Left cardiac atrium (tissue), 4 donors: ENCODE measurements at regions of chr11 and their contacts with region 1.

Region 1: GRCh38 chr11:118928108-118928870 is 2.6 kb upstream of the BCL9L start:
- DNase-seq: peak; percentile 90
- ATAC-seq: peak; percentile 75 to 78

Region 2: DNA sequence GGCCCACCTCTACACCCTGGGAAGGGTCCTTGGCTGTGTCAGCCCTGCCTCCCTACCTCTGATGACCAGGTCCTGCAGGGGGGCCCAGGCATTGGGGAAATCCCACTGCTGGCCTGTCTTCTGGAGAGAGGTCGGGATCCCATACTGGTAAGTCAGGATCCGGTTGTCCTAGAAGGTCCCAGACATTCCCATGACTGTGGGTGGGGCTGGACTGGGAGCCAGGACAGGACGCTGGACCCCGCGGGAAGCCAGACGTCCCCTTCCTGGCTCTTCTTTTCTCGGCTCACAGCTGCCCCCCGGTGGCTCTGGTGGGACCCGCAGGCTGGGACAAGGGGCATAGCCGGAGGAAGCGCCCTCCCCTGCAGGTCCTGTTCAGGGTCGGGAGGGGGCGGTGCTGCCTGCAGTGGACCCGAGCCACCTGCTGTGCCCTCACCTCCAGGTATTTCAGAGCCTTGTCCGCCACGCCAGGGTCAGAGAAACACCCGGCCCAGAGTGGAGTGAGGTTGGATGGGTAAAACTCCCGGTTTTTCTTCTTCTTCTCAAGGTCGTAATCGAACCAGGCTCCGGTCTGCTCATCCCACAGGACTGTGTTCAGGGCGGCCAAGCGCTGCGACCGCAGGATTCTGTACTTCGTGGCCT is 268.9 kb before region 1 on chr11:
- intact Hi-C with region 1: loop called in 1 of 2 experiments (anchors 1 kb)
- DNase-seq: peak; percentile 93
- ATAC-seq: peak; percentile 76 to 85

Region 3: DNA sequence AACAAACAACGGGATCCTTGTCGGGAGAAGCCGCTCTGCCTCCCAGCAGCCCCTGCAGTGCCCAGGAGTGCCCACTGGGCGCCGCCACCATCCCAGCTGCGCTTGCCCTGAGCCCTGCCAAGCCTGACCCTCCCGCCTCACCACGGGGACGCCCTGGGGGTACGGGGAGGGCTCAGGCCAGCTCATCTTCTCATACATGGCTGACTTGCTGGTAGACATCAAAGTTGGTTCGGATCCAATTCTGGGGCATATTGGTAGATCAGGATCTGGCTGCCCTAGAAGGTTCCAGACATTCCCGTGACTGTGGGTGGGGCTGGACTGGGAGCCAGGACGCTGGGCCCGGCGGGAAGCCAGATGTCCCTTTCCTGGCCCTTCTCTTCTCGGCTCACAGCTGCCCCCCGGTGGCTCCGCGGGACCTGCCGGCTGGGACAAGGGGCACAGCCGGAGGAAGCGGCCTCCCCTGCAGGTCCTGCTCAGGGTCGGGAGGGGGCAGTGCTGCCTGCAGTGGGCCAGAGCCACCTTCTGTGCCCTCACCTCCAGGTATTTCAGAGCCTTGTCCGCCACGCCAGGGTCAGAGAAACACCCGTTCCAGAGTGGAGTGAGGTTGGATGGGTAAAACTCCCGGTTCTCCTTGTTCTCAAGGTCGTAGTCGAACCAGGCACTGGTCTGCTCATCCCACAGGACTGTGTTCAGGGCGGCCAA is 238.3 kb before region 1 on chr11:
- intact Hi-C with region 1: loop called in 1 of 2 experiments (anchors 2 kb)
- DNase-seq: peak; percentile 86
- ATAC-seq: peak; percentile 96

Region 4: GRCh38 chr11:118791111-118791965 is 137.0 kb before region 1 on chr11 and contains the start of gene DDX6:
- intact Hi-C with region 1: loop called in 1 of 2 experiments (anchors 5 kb)
- DNase-seq: peak; percentile 94
- ATAC-seq: peak; percentile 87 to 88
- total RNA-seq, gene DDX6: 109 to 115 TPM

Region 5: DNA sequence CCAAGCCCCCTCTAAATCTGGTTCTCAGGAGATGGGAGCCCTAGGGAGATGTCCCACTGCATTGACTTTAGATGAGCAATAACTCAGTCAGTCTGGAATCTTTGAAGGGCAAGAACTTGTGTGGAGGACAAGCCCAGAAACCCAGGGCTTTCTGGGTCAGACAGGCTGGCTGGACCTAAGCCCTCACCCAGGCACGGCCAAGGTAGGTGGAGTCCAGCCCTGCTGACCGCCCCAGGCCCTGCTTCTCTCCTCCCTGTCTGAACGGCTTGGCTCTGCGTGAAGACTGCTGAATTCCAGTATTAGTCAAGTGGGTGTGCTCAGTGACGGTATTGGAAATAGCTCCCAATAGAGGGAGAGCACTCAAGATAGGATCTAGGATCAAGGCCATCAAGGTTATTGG is 38.5 kb before region 1 on chr11:
- intact Hi-C with region 1: loop called in 1 of 2 experiments (anchors 5 kb)
- DNase-seq: peak; percentile 88
- ATAC-seq: peak; percentile 90

Region 6: GRCh38 chr11:118907051-118908042 is 20.9 kb before region 1 on chr11:
- intact Hi-C with region 1: loop called (anchors 1 to 2 kb)
- DNase-seq: peak; percentile 83
- ATAC-seq: peak; percentile 21 to 40

Region 7: GRCh38 chr11:119106564-119107537 is 178.6 kb after region 1 on chr11 and contains the start of gene C2CD2L:
- intact Hi-C with region 1: no loop called
- DNase-seq: peak; percentile 93
- ATAC-seq: peak; percentile 95 to 96
- total RNA-seq, gene C2CD2L: 8.7 to 9.3 TPM